Activated B cell treated with CpG ODN at 0.5 μM for 24 hours (primary cell): ENCODE measurements at regions of chr6 and their contacts with region 1.

Region 1: DNA sequence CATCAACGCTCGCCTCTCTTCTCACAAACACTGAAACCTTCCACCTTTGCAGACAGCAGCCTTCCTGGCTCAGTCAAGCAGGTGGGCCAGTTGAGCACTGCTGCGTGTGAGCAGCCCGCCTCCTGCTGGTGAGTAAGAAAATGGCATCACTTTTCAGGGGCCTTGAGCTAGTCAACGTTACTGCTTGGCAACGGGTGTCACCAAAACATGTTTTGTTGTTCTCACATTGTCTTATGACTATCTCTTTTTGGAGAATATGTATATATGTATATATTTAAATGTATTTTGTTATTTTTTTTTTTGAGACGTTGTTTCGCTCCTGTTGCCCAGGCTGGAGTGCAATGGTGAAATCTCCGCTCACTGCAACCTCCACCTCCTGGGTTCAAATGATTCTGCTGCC is 97.0 kb upstream of the AGPAT4 start:
- DNase-seq: peak; percentile 27
- ATAC-seq: peak; percentile 87
- H3K4me3 Mint-ChIP-seq: no peak overlapping the region
- H3K27ac Mint-ChIP-seq: no peak overlapping the region
- H3K4me1 Mint-ChIP-seq: no peaks in the 10 kb centered on the region
- H3K27me3 Mint-ChIP-seq: no peaks in the 10 kb centered on the region
- CTCF ChIP-seq: peak; percentile 42

Region 2: GRCh38 chr6:160520043-160520904 is 850.6 kb before region 1 on chr6:
- CTCF ChIA-PET with region 1: interaction called, 17 read pairs
- POLR2A ChIA-PET with region 1: no interaction called
- intact Hi-C with region 1: loop called (anchors 1 kb)
- DNase-seq: peak; percentile 73
- ATAC-seq: peak; percentile 78
- H3K4me3 Mint-ChIP-seq: peak overlapping the region; percentile 93
- H3K27ac Mint-ChIP-seq: peak overlapping the region; percentile 81
- H3K4me1 Mint-ChIP-seq: peaks cover 11% of the 10 kb centered on the region
- H3K27me3 Mint-ChIP-seq: peaks cover 26% of the 10 kb centered on the region
- CTCF ChIP-seq: no peak

Region 3: GRCh38 chr6:160750276-160750689 is 620.6 kb before region 1 on chr6:
- CTCF ChIA-PET with region 1: interaction called, 12 read pairs
- POLR2A ChIA-PET with region 1: no interaction called
- intact Hi-C with region 1: loop called (anchors 1 kb)
- DNase-seq: no peak
- ATAC-seq: peak; percentile 57
- H3K4me3 Mint-ChIP-seq: no peak overlapping the region
- H3K27ac Mint-ChIP-seq: no peak overlapping the region
- H3K4me1 Mint-ChIP-seq: no peaks in the 10 kb centered on the region
- H3K27me3 Mint-ChIP-seq: peaks cover 18% of the 10 kb centered on the region
- CTCF ChIP-seq: no peak

Region 4: DNA sequence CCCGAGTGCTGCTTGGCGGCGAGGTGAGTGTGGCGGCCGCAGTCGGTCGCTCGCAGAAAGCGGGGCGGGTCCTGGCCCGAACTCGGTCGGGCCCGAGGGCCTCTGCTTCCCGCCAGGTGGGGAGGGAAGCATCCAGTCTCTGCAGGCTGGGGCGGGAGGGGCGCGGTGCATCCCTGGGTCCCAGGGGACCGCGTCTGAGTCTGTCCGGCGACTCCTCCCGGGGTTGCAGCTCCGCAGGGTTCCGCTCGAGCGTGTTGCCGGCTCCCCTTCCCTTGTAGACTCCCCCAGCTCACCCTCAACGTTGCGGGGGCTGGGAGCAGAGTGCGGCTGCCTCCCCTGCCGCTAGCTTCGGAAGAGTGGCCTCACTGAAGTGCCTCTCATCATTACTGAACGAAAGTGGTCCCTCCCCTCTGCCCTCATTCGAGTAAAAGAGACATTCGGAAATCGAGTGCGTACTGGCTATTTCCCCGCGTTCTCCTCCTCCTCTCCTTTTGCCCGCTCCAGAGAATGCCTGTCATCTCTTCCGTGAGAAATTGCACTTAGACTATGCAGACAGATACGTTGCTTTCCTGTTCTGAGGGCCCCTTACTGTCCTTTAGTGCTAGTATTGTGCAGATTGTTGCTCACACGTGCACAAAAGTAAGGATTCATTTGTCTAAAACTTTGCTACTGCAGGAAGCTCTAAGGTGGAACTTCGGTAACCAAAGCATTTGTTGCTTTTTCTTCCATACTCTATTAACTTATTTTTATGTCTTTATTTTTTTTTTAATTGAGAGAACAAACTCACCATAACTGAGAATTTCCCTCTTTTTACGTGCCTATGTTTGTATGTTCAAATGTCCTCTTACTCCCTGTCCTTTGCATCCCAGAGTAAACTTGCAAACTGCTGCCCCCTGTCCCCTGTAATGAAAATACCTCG is 378.6 kb before region 1 on chr6:
- CTCF ChIA-PET with region 1: no interaction called
- POLR2A ChIA-PET with region 1: no interaction called
- intact Hi-C with region 1: loop called (anchors 5 kb)
- DNase-seq: no peak
- ATAC-seq: peak; percentile 59
- H3K4me3 Mint-ChIP-seq: peak overlapping the region; percentile 90
- H3K27ac Mint-ChIP-seq: peak overlapping the region; percentile 83
- H3K4me1 Mint-ChIP-seq: peaks cover 44% of the 10 kb centered on the region
- H3K27me3 Mint-ChIP-seq: peaks cover 2% of the 10 kb centered on the region
- CTCF ChIP-seq: no peak

Region 5: DNA sequence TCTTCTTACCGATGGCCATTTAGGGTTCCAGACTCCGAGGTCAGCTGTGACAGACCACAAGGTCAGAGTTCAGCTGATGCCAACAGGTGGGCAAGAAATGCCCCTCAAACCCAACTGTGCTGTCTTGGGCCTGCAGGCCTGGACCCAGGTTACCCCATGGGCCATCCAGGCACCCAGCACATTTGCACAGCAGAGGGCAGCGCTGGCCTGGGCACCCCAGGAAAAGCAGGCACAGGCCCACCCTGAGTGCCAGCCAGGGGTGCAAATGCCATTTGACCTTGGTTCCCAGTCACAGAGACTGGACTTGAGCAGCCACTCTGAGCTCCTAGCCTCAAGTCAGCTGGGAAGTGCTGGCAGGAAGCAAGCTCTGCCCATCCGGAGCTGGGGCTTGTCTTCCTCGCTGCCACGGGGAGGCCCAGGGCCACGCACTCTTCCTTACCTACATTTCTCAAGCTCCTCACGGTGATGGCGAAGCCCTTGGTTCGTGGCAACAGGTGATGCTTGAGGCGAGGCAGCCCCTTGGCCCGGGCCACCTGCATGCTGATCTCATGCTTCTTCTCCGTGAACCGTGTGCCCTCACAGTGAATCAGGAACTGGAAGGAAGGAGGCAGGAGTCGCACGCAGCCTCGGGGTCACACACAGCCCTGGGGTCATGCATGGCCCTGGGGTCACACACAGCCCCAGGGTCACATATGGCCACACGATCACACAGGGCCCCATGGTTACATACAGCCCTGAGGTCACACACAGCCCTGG is 217.8 kb before region 1 on chr6:
- CTCF ChIA-PET with region 1: interaction called, 4 read pairs
- POLR2A ChIA-PET with region 1: no interaction called
- intact Hi-C with region 1: loop called (anchors 1 kb)
- DNase-seq: no peak
- ATAC-seq: no peak
- H3K4me3 Mint-ChIP-seq: no peak overlapping the region
- H3K27ac Mint-ChIP-seq: no peak overlapping the region
- H3K4me1 Mint-ChIP-seq: no peaks in the 10 kb centered on the region
- H3K27me3 Mint-ChIP-seq: no peaks in the 10 kb centered on the region
- CTCF ChIP-seq: no peak